ENCODE measurements at regions of chr10 and their contacts with region 1.

Region 1: GRCh38 chr10:100670828-100671479 is 74.4 kb upstream of the PAX2 start:
- DNase-seq: peak; percentile 63
- H3K4me3 Mint-ChIP-seq: no peak overlapping the region
- H3K27ac Mint-ChIP-seq: no peak overlapping the region
- H3K4me1 Mint-ChIP-seq: no peaks in the 10 kb centered on the region
- H3K27me3 Mint-ChIP-seq: peaks cover 69% of the 10 kb centered on the region
- CTCF ChIP-seq: peak; percentile 72

Region 2: GRCh38 chr10:100614429-100615095 is 56.4 kb before region 1 on chr10:
- CTCF ChIA-PET with region 1: interaction called, 10 read pairs
- intact Hi-C with region 1: no loop called
- DNase-seq: no peak
- H3K4me3 Mint-ChIP-seq: no peak overlapping the region
- H3K27ac Mint-ChIP-seq: no peak overlapping the region
- H3K4me1 Mint-ChIP-seq: no peaks in the 10 kb centered on the region
- H3K27me3 Mint-ChIP-seq: peaks cover 100% of the 10 kb centered on the region
- CTCF ChIP-seq: no peak

Region 3: DNA sequence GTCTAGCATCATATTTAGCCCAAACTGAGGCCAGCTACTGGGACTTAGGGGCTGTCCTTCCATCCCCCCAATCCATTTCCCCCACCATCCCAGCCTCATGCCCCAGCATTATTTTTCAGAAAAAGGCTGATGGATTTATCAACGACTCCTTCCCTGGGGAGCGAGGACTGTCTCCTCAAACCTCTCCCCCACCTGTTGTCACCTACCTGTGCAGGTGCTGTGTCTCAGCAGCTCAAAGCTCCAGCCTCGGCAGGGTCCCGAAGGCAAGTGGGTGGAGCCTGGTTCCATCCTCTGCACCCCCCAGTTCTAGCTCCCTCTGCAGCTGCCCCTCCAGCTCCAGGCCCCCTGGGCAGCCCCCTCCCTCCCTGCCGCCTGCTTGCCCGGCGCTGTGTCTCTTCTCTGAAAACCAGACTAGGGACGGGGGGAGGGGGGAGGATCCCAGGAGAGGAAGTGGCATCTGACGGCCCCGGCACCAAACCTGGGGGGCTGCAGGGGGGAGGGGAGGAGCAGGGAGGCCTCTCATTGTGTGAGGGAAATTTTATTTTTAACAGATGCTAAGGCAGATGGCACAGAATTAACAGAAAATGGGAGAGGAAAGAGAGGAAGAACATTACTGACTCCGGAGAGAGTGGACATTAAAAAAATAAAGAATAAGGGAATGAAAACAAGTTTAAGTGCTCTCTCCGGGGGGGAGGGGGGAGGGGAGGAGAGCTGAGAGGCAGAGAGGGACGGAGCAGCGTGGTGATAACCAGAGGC is 12.8 kb after region 1 on chr10:
- CTCF ChIA-PET with region 1: no interaction called
- intact Hi-C with region 1: no loop called
- DNase-seq: no peak
- H3K4me3 Mint-ChIP-seq: no peak overlapping the region
- H3K27ac Mint-ChIP-seq: no peak overlapping the region
- H3K4me1 Mint-ChIP-seq: no peaks in the 10 kb centered on the region
- H3K27me3 Mint-ChIP-seq: peaks cover 81% of the 10 kb centered on the region
- CTCF ChIP-seq: no peak

Region 4: GRCh38 chr10:100710151-100710871 is 39.4 kb after region 1 on chr10:
- CTCF ChIA-PET with region 1: no interaction called
- intact Hi-C with region 1: no loop called
- DNase-seq: no peak
- H3K4me3 Mint-ChIP-seq: no peak overlapping the region
- H3K27ac Mint-ChIP-seq: no peak overlapping the region
- H3K4me1 Mint-ChIP-seq: no peaks in the 10 kb centered on the region
- H3K27me3 Mint-ChIP-seq: peaks cover 94% of the 10 kb centered on the region
- CTCF ChIP-seq: no peak

Region 5: GRCh38 chr10:100743626-100744135 is 72.7 kb after region 1 on chr10:
- CTCF ChIA-PET with region 1: no interaction called
- intact Hi-C with region 1: loop called (anchors 10 kb)
- DNase-seq: no peak
- H3K4me3 Mint-ChIP-seq: no peak overlapping the region
- H3K27ac Mint-ChIP-seq: no peak overlapping the region
- H3K4me1 Mint-ChIP-seq: peaks cover 16% of the 10 kb centered on the region
- H3K27me3 Mint-ChIP-seq: peaks cover 92% of the 10 kb centered on the region
- CTCF ChIP-seq: peak; percentile 46

Region 6: GRCh38 chr10:100878291-100878910 is 207.4 kb after region 1 on chr10:
- CTCF ChIA-PET with region 1: interaction called, 4 read pairs
- intact Hi-C with region 1: loop called (anchors 5 kb)
- DNase-seq: peak; percentile 41
- H3K4me3 Mint-ChIP-seq: no peak overlapping the region
- H3K27ac Mint-ChIP-seq: no peak overlapping the region
- H3K4me1 Mint-ChIP-seq: peaks cover 19% of the 10 kb centered on the region
- H3K27me3 Mint-ChIP-seq: peaks cover 54% of the 10 kb centered on the region
- CTCF ChIP-seq: peak; percentile 57

Measured in Calu3 (cell line).